Left cardiac atrium (tissue), 4 donors: ENCODE measurements at regions of chr22 and their contacts with region 1.

Region 1: GRCh38 chr22:27873472-27873871 is 45.6 kb downstream of the PITPNB start:
- DNase-seq: peak; percentile 41
- ATAC-seq: peak; percentile 77 to 83

Region 2: GRCh38 chr22:27853424-27853823 is 20.0 kb before region 1 on chr22:
- intact Hi-C with region 1: loop called in 1 of 2 experiments (anchors 2 kb)
- DNase-seq: no peak
- ATAC-seq: peak; percentile 69 to 77